ENCODE measurements at regions of chr2 and their contacts with region 1.

Region 1: DNA sequence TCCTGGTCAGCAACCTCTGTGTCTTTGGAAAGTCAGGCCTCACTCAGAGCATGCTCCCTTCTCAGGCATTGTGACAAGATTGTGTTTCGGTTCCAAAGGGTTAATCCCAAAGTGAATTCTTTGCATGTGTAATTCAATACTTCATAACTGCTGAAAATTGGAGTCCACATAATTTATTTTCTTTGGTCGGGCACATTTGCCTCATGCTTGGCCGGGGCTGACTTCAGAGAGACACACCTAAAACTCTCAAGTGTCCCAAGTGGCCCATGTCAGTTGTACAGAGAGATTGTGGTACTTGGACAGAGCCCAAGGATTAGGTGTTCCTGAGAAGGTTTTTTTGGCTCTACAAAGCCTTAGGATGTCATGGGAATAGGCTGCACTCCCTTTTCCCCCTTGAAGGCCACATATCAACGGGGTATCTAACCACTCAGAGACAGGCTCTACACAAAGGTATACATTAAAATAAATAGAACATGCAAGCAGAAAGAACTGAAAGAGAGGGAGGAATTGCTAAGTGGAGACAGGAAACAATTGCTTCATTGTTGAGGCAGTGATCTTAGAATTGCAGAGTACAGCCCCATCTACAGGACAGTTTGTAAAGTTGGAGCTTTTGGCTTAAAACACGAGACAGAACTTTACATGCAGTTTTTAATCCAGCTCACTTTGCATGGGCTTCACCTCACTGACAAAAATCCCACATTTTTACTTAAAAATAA is 1232.3 kb upstream of the ZEB2 start:
- DNase-seq: peak; percentile 93
- H3K4me3 Mint-ChIP-seq: peak overlapping the region; percentile 20
- H3K27ac Mint-ChIP-seq: peak overlapping the region; percentile 75
- H3K4me1 Mint-ChIP-seq: peaks cover 30% of the 10 kb centered on the region
- H3K27me3 Mint-ChIP-seq: no peaks in the 10 kb centered on the region
- CTCF ChIP-seq: peak; percentile 55

Region 2: DNA sequence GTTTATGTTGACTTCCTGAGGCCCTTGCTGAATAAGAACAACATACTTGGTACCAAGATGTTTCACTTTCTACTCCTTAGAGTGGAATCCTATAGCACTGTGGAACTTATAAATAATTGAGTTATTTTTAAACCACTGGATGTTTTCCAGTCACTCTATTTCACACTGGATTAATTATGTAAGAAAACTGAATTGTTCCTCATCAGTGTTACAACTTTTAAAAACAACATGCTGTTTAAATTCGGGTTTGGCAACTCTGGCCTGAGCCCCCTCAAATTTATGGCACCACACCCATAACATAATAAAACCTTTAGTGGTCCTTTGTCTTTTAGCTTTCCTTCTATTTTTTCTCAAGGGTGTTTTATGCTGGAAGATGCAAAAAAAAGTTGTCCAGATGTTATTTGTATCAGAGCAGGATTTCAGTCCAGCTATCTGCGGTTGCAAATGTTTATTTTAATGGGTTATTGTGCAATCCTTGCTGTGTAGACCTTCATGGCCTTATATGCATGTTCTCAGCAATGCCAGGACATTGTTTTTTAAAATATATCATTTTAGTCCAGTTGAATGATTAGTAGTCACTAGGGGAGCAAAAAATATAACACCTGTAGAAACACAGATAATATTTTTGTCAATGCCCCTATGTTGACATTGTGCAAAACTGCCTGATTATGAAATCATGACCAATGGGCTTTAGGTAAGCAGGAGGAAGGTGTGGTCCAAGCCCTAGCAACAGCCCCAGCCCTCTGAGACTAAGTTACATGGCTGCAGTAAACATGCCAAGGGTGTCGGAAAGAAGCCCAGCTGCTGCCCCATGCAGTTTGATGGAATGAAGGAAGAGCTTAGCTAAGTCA is 594.3 kb before region 1 on chr2:
- CTCF ChIA-PET with region 1: no interaction called
- POLR2A ChIA-PET with region 1: no interaction called
- intact Hi-C with region 1: loop called (anchors 1 kb)
- DNase-seq: peak; percentile 89
- H3K4me3 Mint-ChIP-seq: peak overlapping the region; percentile 20
- H3K27ac Mint-ChIP-seq: peak overlapping the region; percentile 85
- H3K4me1 Mint-ChIP-seq: peaks cover 26% of the 10 kb centered on the region
- H3K27me3 Mint-ChIP-seq: no peaks in the 10 kb centered on the region
- CTCF ChIP-seq: no peak

Region 3: DNA sequence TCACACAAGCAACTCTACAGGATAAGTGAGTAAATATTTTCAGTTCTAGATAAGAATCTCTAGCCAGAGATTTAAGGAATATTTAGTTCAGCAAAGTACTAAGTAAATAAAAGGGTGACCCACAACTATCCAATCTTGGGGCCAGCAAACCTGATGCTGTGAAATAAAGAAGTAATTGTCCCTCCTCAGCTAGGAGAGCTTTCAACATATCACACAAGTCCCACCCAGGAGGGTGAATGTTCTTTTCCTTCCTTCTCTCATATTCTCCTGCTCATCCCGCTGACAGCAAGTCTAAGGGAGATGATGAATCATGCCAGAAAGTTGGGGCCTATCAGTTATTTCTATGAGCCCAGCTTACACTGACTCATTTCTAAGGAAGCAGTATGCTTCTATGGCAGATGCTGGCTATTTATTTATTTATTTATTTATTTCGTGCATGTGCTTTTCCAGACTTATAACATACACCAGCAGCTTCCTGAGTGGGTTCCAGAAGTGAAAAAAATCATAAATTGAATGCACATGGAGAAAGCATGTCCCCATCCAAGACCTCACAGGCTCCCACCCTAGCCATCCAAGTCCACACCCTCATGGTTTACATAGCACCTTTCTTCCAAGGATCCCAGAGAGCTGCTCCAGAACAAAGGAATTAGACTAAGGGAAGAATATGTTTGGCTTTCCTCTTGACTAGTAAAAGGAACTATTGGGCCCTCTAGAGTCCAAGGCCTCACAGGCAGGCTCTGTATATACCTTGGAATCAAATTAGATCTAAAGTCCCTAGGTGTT is 158.2 kb before region 1 on chr2:
- CTCF ChIA-PET with region 1: interaction called, 3 read pairs
- POLR2A ChIA-PET with region 1: no interaction called
- intact Hi-C with region 1: loop called (anchors 5 kb)
- DNase-seq: peak; percentile 77
- H3K4me3 Mint-ChIP-seq: no peak overlapping the region
- H3K27ac Mint-ChIP-seq: peak overlapping the region; percentile 79
- H3K4me1 Mint-ChIP-seq: peaks cover 32% of the 10 kb centered on the region
- H3K27me3 Mint-ChIP-seq: no peaks in the 10 kb centered on the region
- CTCF ChIP-seq: no peak

Region 4: GRCh38 chr2:145669301-145669700 is 82.9 kb before region 1 on chr2:
- CTCF ChIA-PET with region 1: no interaction called
- POLR2A ChIA-PET with region 1: no interaction called
- intact Hi-C with region 1: no loop called
- DNase-seq: no peak
- H3K4me3 Mint-ChIP-seq: no peak overlapping the region
- H3K27ac Mint-ChIP-seq: no peak overlapping the region
- H3K4me1 Mint-ChIP-seq: peaks cover 5% of the 10 kb centered on the region
- H3K27me3 Mint-ChIP-seq: no peaks in the 10 kb centered on the region
- CTCF ChIP-seq: no peak

Region 5: DNA sequence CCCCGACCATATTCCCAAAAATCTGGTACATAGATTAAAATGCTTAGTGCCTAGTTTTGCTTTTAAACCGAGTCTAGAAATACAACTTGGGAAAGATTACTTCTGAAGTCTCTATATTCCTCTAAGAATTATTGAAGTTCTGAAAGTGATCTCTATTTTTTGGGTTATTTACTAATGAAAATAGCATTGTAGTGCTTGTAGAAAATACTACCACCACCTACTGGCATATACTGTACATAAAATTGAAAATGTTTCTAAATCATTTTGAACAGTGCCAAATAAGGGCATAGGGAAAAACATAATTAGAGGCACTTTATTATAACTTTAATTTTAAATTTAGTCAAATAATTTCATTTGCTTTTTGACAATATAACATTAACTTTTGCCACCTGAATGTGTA is 167.2 kb after region 1 on chr2:
- CTCF ChIA-PET with region 1: no interaction called
- POLR2A ChIA-PET with region 1: no interaction called
- intact Hi-C with region 1: loop called (anchors 10 kb)
- DNase-seq: no peak
- H3K4me3 Mint-ChIP-seq: no peak overlapping the region
- H3K27ac Mint-ChIP-seq: no peak overlapping the region
- H3K4me1 Mint-ChIP-seq: no peaks in the 10 kb centered on the region
- H3K27me3 Mint-ChIP-seq: no peaks in the 10 kb centered on the region
- CTCF ChIP-seq: peak; percentile 22

Region 6: DNA sequence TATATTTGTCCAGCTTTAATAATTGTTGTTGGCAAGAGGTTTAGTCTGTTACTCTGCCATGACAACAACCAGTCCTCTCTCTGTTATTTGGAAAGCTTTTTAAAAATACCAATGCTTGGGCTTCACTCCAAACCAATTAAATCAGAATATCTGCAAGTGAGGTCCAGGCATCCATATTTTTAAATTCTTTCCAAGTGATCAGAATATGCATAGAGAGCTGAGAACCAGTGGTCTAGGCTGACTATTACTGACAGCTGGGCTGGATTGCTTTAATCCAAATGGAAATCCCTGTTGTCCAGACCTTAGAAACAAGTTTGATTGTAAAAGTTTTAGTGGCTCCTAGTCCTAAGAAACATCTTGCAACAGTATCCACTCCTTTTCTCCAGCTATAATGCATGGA is 1032.9 kb after region 1 on chr2:
- CTCF ChIA-PET with region 1: no interaction called
- POLR2A ChIA-PET with region 1: no interaction called
- intact Hi-C with region 1: no loop called
- DNase-seq: no peak
- H3K4me3 Mint-ChIP-seq: no peak overlapping the region
- H3K27ac Mint-ChIP-seq: no peak overlapping the region
- H3K4me1 Mint-ChIP-seq: no peaks in the 10 kb centered on the region
- H3K27me3 Mint-ChIP-seq: no peaks in the 10 kb centered on the region
- CTCF ChIP-seq: no peak